ENCODE measurements at regions of chr15 and their contacts with region 1.

Region 1: GRCh38 chr15:79028411-79028964 is 62.1 kb downstream of the RASGRF1 start:
- DNase-seq: peak; percentile 75
- ATAC-seq: peak; percentile 65
- H3K4me3 Mint-ChIP-seq: no peak overlapping the region
- H3K27ac Mint-ChIP-seq: no peak overlapping the region
- H3K4me1 Mint-ChIP-seq: peaks cover 11% of the 10 kb centered on the region
- H3K27me3 Mint-ChIP-seq: no peaks in the 10 kb centered on the region; the same call in 1 of the 2 replicates
- CTCF ChIP-seq: peak; percentile 95

Region 2: GRCh38 chr15:78944669-78945407 is 83.7 kb before region 1 on chr15 and contains the start of gene CTSH:
- CTCF ChIA-PET with region 1: interaction called, 11 read pairs
- POLR2A ChIA-PET with region 1: no interaction called
- DNase-seq: peak; percentile 90
- ATAC-seq: peak; percentile 94
- H3K4me3 Mint-ChIP-seq: peak within 1 kb of the TSS; percentile 70
- H3K27ac Mint-ChIP-seq: no peak within 1 kb of the TSS
- H3K4me1 Mint-ChIP-seq: peaks cover 8% of the 10 kb centered on the region
- H3K27me3 Mint-ChIP-seq: peaks cover 47% of the 10 kb centered on the region
- CTCF ChIP-seq: no peak
- total RNA-seq, gene CTSH: 20.4 to 31.8 TPM (median 31.1 TPM) in 3 replicates

Region 3: DNA sequence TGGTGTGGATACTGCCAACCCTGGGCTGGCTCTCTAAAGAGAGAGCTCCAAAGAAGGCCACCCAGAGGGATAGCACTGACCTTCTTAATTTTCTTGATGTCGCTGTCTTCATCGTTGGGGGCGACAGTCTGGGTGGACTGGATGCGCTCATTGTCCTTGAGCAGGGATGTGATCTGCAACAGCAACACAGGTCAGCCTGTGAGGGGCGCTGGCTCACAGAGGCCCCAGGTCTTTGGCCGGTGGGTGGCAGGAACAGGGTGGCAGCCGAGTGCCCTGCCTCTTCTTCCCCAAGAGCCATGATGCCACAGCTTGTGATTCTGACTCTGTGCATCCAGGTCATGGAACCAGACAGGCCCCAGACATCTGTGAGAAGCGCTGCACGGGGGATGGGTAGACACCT is 20.9 kb after region 1 on chr15:
- CTCF ChIA-PET with region 1: interaction called, 10 read pairs
- POLR2A ChIA-PET with region 1: no interaction called
- DNase-seq: no peak
- ATAC-seq: no peak
- H3K4me3 Mint-ChIP-seq: no peak overlapping the region
- H3K27ac Mint-ChIP-seq: no peak overlapping the region
- H3K4me1 Mint-ChIP-seq: no peaks in the 10 kb centered on the region
- H3K27me3 Mint-ChIP-seq: peaks cover 32% of the 10 kb centered on the region
- CTCF ChIP-seq: no peak

Region 4: GRCh38 chr15:79168922-79169456 is 140.5 kb after region 1 on chr15:
- CTCF ChIA-PET with region 1: interaction called, 14 read pairs
- POLR2A ChIA-PET with region 1: no interaction called
- DNase-seq: peak; percentile 57
- ATAC-seq: peak; percentile 86
- H3K4me3 Mint-ChIP-seq: no peak overlapping the region
- H3K27ac Mint-ChIP-seq: no peak overlapping the region
- H3K4me1 Mint-ChIP-seq: peaks cover 24% of the 10 kb centered on the region
- H3K27me3 Mint-ChIP-seq: peaks cover 4% of the 10 kb centered on the region; the same call in 1 of the 2 replicates
- CTCF ChIP-seq: no peak

Region 5: GRCh38 chr15:79209690-79210089 is 181.2 kb after region 1 on chr15:
- CTCF ChIA-PET with region 1: interaction called, 21 read pairs
- POLR2A ChIA-PET with region 1: no interaction called
- DNase-seq: peak; percentile 67
- ATAC-seq: peak; percentile 73
- H3K4me3 Mint-ChIP-seq: peak overlapping the region; percentile 59
- H3K27ac Mint-ChIP-seq: no peak overlapping the region
- H3K4me1 Mint-ChIP-seq: peaks cover 37% of the 10 kb centered on the region
- H3K27me3 Mint-ChIP-seq: no peaks in the 10 kb centered on the region
- CTCF ChIP-seq: peak; percentile 64

Measured in WTC11 (cell line).